ENCODE measurements at regions of chr16 and their contacts with region 1.

Region 1: DNA sequence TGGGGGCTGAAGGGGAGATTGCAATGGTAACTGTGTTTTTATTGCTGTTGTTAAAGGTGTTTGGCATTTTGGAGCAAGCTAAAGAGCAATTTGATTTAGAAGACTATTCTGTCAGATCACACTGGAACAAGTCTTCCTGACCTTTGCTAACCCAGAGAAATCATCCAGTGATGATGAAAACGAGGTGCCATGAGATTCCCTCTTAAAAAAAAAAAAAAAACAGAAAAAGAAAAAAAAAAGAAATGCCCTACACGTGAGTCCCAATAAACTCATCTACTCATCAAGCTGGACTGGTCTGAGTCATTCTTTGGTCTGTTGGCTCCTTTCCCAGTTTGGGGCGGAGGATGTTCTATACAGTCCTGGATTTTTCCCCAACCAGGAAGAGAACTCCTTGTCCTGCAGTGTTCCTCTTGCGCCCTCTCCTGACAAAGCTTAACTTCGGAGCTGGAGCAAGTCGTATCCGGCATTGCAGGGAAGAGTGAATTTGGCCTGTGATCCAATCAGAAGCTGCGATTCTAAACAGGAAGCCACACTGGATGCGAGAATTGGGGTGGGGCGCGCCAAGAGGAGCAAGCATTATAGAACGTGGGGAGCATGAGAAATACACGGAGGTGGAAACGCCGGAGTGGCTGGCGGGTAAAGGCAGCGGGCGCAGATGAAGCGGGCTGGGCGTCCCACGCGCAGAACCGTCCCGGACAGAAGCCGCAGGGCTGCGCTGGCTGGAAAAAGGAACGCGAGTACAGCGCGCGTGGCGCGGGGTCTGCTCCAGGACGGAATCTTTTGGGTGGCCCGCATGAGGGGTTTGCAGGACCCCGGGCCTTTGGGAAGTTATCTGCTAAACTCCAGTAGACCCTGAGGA is 22.4 kb upstream of the CRYM start:
- DNase-seq: peak; percentile 69
- ATAC-seq: peak; percentile 43
- H3K4me3 ChIP-seq: peak overlapping the region; percentile 51 to 85 (median 65)
- H3K4me3 Mint-ChIP-seq: peak overlapping the region; percentile 97
- H3K27ac ChIP-seq: no peak overlapping the region
- H3K27ac Mint-ChIP-seq: peak overlapping the region; percentile 86
- H3K4me1 ChIP-seq: peaks cover 12 to 26% of the 10 kb centered on the region in 2 donors
- H3K4me1 Mint-ChIP-seq: peaks cover 28% of the 10 kb centered on the region
- H3K27me3 ChIP-seq: no peaks in the 10 kb centered on the region
- H3K27me3 Mint-ChIP-seq: no peaks in the 10 kb centered on the region
- CTCF ChIP-seq: no peak

Region 2: DNA sequence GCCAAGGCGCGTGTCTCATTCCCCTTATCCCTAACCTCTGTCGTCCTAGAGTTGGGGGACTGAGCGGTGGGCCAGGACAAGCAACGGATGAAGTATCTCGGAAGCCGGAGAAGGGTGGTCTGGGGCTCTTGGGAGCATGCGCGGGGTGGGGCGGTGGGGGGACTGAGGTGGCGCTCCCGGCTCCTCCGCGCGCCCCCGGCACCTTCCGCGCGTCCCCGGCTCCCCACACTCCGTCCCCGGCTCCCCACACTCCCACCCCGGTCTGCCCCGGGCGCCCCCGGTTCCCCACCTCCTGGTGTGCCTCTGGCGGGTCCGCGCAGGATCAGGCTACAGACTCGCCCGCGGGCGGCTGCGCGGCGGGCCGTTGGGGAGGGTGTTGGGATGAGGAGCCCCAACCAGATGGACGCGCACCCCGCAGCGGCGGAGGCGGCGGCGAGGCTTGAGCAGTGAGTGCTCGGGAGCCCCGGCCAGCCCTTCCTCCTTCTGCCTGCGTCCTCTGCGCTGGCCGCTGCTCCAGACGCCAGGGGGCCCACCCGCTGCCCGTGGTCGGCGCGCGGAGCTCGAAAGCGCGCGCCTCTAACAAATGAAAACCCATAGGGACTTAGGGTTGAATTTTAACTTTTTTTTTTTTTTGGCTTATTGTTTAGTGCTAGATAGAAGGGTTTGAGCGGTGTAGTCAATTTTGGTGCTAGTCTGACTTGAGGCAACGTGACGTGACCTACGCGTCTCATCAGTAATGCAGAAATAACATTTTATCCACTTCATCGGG is 16.8 kb before region 1 on chr16:
- CTCF ChIA-PET with region 1: interaction called, 13 read pairs
- POLR2A ChIA-PET with region 1: interaction called, 6 read pairs
- intact Hi-C with region 1: loop called (anchors 1 kb)
- DNase-seq: peak; percentile 67
- ATAC-seq: peak; percentile 91
- H3K4me3 ChIP-seq: peak overlapping the region; percentile 29 to 66 (median 47)
- H3K4me3 Mint-ChIP-seq: peak overlapping the region; percentile 87
- H3K27ac ChIP-seq: no peak overlapping the region
- H3K27ac Mint-ChIP-seq: no peak overlapping the region
- H3K4me1 ChIP-seq: peaks cover 7 to 9% of the 10 kb centered on the region in 2 donors
- H3K4me1 Mint-ChIP-seq: peaks cover 8% of the 10 kb centered on the region
- H3K27me3 ChIP-seq: peaks cover 0 to 17% (median 13%) of the 10 kb centered on the region in 4 experiments
- H3K27me3 Mint-ChIP-seq: peaks cover 23% of the 10 kb centered on the region
- CTCF ChIP-seq: peak; percentile 37